HepG2 (cell line): ENCODE measurements at regions of chr2 and their contacts with region 1.

Region 1: GRCh38 chr2:2623939-2624338 is 292.9 kb upstream of the MYT1L start:
- DNase-seq: no peak
- ATAC-seq: no peak
- H3K4me3 ChIP-seq: no peak overlapping the region
- H3K27ac ChIP-seq: no peak overlapping the region
- H3K4me1 ChIP-seq: no peaks in the 10 kb centered on the region
- H3K27me3 ChIP-seq: peaks cover 2 to 16% of the 10 kb centered on the region in 2 experiments; a peak in 3 of 5 replicates
- CTCF ChIP-seq: no peak
- EP300 ChIP-seq: no peak
- POLR2A ChIP-seq: no peak
- RAD21 ChIP-seq: no peak

Region 2: DNA sequence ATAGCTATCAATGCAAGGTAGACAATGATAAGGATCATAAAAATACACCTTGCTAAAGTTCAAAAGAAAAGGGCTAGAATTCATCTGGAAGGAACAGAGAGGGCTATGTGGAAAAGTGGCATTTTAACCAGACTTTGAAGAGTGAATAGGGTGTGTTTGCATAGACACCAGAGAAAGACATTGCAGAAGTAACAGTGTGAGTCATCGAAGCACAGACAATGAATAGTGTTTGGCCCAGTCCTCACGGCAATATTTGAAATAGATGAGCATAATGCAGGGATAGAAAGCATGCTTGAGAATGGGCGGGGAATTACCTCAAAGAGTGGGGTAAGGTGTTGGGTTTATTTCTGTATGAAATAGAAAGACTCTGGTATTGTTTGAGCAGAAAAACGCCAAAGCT is 317.1 kb before region 1 on chr2:
- CTCF ChIA-PET with region 1: no interaction called
- POLR2A ChIA-PET with region 1: no interaction called
- in situ Hi-C with region 1: no loop called
- intact Hi-C with region 1: no loop called
- DNase-seq: no peak
- ATAC-seq: no peak
- H3K4me3 ChIP-seq: no peak overlapping the region
- H3K27ac ChIP-seq: no peak overlapping the region
- H3K4me1 ChIP-seq: no peaks in the 10 kb centered on the region
- H3K27me3 ChIP-seq: no peaks in the 10 kb centered on the region; a peak in 1 of 5 replicates
- CTCF ChIP-seq: no peak
- EP300 ChIP-seq: no peak
- POLR2A ChIP-seq: no peak
- RAD21 ChIP-seq: no peak

Region 3: GRCh38 chr2:2662037-2662850 is 38.3 kb after region 1 on chr2:
- CTCF ChIA-PET with region 1: no interaction called
- POLR2A ChIA-PET with region 1: no interaction called
- in situ Hi-C with region 1: no loop called
- intact Hi-C with region 1: loop called (anchors 1 kb)
- DNase-seq: no peak
- ATAC-seq: no peak
- H3K4me3 ChIP-seq: no peak overlapping the region
- H3K27ac ChIP-seq: no peak overlapping the region
- H3K4me1 ChIP-seq: peaks cover 13% of the 10 kb centered on the region
- H3K27me3 ChIP-seq: peaks cover 10 to 43% of the 10 kb centered on the region in 2 experiments
- CTCF ChIP-seq: no peak
- EP300 ChIP-seq: no peak
- POLR2A ChIP-seq: no peak
- RAD21 ChIP-seq: no peak